ENCODE measurements at regions of chr1 and their contacts with region 1.

Region 1: GRCh38 chr1:228515200-228515834 is 28.1 kb downstream of the RNF187 start:
- DNase-seq: peak in 4 of 7 donors; percentile 24 to 50 (median 38)
- H3K4me3 ChIP-seq: no peak overlapping the region
- H3K27ac ChIP-seq: no peak overlapping the region
- H3K4me1 ChIP-seq: no peaks in the 10 kb centered on the region
- H3K27me3 ChIP-seq: peaks cover 4% of the 10 kb centered on the region
- CTCF ChIP-seq: peak; percentile 44 to 94 (median 77)
- POLR2A ChIP-seq: no peak

Region 2: GRCh38 chr1:227999056-227999930 is 516.0 kb before region 1 on chr1:
- intact Hi-C with region 1: loop called in 1 of 2 experiments (anchors 5 kb)
- DNase-seq: peak; percentile 68 to 85 (median 81)
- H3K4me3 ChIP-seq: no peak overlapping the region
- H3K27ac ChIP-seq: no peak overlapping the region
- H3K4me1 ChIP-seq: no peaks in the 10 kb centered on the region
- H3K27me3 ChIP-seq: peaks cover 6% of the 10 kb centered on the region
- CTCF ChIP-seq: peak; percentile 65 to 96 (median 83)
- POLR2A ChIP-seq: no peak

Region 3: DNA sequence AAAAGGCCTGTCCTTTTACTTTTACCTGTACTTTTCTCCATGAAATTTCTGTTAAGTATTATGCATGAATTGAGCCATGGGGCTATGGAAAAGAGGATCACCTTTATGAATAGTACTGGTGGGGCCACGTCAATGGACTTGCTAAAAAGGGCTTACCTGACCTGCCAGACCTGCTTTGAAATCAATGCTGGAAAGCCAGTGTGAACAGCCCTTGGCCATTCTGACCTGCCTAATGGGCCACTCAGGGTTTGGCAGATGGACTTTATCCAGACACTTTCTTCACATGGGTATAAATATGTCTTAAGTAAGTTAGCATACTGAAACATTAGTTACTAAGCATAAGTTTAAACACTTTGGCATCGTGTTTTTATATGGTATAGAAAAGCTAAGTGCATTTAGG is 383.6 kb before region 1 on chr1:
- intact Hi-C with region 1: loop called in 1 of 2 experiments (anchors 5 kb)
- DNase-seq: no peak
- H3K4me3 ChIP-seq: no peak overlapping the region
- H3K27ac ChIP-seq: no peak overlapping the region
- H3K4me1 ChIP-seq: peaks cover 0 to 8% of the 10 kb centered on the region in 2 donors
- H3K27me3 ChIP-seq: no peaks in the 10 kb centered on the region
- CTCF ChIP-seq: no peak
- POLR2A ChIP-seq: no peak

Region 4: GRCh38 chr1:228416217-228416933 is 98.9 kb before region 1 on chr1 and contains the start of gene TRIM17:
- intact Hi-C with region 1: no loop called
- DNase-seq: no peak
- H3K4me3 ChIP-seq: peak within 1 kb of the TSS in 2 of 4 donors; percentile 17 to 45
- H3K27ac ChIP-seq: no peak within 1 kb of the TSS
- H3K4me1 ChIP-seq: peaks cover 8 to 14% of the 10 kb centered on the region in 2 donors
- H3K27me3 ChIP-seq: peaks cover 14% of the 10 kb centered on the region
- CTCF ChIP-seq: peak in 2 of 6 experiments; percentile 21 to 37
- POLR2A ChIP-seq: no peak
- total RNA-seq, gene TRIM17: 0.17 to 7.4 (median 0.96) TPM in 7 of 9 donors, not detected in the others

Region 5: DNA sequence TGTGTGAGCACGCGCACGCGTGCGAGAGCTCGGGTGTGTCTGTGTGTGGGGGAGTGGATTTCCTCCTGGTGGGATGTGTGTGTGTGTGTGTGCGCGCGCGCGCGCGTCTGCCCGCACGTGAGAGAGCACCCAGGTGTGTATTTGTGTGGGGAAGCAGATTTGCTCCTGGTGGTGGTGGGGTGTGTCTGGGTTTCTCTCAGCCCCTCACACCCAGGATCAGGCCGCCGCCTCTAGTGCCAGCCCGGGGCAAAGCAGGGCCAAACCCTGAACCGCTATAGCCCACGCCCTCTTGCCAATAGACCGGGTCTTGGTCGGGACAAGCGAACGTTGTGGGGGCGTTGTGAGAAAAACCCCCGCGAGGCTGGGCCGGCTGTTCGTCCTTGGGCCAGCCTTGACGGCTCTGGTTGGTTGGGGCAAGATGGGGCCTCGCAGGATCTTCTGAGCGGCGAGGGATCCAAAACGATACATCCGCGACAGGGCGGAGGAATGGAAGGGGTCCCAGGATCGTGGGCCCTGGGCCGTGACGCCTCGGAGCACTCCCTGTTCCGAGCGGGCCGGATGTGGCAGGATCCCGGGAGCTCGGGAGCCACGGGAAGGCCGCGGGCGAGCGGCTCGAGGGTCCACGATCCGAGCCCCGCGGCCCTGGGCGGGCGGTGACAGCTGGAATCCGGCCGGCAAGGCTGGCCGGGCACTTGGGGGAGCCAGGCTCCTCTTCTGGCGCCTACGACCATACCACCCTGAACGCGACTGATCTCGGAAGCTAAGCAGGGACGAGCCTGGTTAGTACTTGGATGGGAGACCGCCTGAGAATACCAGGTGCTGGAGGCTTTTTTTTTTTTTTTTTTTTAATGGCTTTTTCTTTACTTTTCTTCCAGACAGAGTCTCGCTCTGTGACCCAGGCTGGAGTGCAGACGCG is 40.0 kb after region 1 on chr1:
- intact Hi-C with region 1: no loop called
- DNase-seq: no peak
- H3K4me3 ChIP-seq: no peak overlapping the region
- H3K27ac ChIP-seq: no peak overlapping the region
- H3K4me1 ChIP-seq: no peaks in the 10 kb centered on the region
- H3K27me3 ChIP-seq: no peaks in the 10 kb centered on the region
- CTCF ChIP-seq: no peak
- POLR2A ChIP-seq: no peak